Gastrocnemius medialis (tissue), 4 donors: ENCODE measurements at regions of chr7 and their contacts with region 1.

Region 1: DNA sequence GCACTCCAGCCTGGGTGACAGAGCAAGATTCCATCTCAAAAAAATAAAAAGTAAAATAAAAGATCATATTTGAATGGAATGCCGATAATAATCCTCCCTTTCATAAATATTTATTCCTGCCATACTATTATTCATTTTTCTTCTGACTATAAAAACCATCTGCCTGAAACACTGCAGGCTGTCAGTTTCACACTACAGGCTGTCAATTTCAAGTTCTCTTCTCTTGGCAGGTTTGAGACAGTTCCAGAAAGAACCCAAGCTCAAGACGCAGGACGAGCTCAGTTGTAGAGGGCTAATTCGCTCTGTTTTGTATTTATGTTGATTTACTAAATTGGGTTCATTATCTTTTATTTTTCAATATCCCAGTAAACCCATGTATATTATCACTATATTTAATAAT is 18.2 kb upstream of the AGBL3 start:
- DNase-seq: no peak
- ATAC-seq: no peak
- H3K4me3 ChIP-seq: no peak overlapping the region
- H3K27ac ChIP-seq: no peak overlapping the region
- H3K4me1 ChIP-seq: no peaks in the 10 kb centered on the region
- H3K27me3 ChIP-seq: no peaks in the 10 kb centered on the region
- CTCF ChIP-seq: no peak
- POLR2A ChIP-seq: no peak

Region 2: DNA sequence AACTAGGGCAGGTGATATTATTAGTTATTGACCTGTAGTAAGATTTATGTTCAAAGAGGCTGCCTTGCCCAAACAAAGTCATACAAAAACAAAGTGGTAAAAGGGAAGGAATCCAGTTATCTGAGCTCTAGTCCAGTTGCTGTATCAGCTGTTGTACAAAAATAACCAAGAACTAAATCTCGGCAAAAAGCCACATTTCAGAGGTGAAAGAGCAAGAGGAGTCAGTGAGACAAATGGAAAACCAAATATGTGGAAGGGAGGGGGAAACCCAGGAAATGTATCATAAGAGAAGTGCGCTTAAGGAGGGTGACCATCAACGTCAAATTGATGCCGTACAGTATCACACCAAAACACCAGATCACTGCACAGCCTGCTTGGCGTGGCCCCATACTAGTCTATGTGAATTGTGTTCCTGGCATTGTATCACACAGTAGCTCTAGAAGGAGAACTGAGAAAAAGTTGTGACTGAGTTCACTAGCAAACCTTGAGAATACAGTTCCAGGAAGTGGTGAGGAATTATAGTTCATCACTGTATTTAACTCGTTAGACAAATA is 24.6 kb after region 1 on chr7:
- in situ Hi-C with region 1: no loop called
- intact Hi-C with region 1: loop called (anchors 2 kb)
- DNase-seq: no peak
- ATAC-seq: peak in 1 of 2 donors; percentile 28
- H3K4me3 ChIP-seq: no peak overlapping the region
- H3K27ac ChIP-seq: peak overlapping the region; percentile 32 to 57 (median 38)
- H3K4me1 ChIP-seq: peaks cover 28 to 36% of the 10 kb centered on the region in 2 donors
- H3K27me3 ChIP-seq: no peaks in the 10 kb centered on the region
- CTCF ChIP-seq: no peak
- POLR2A ChIP-seq: no peak